ENCODE measurements at regions of chr5 and their contacts with region 1.

Region 1: GRCh38 chr5:124748687-124749594 is 2.5 kb upstream of the ZNF608 start:
- DNase-seq: peak; percentile 86
- ATAC-seq: peak; percentile 89
- H3K4me3 ChIP-seq: peak overlapping the region; percentile 83
- H3K27ac ChIP-seq: peak overlapping the region; percentile 94
- H3K4me1 ChIP-seq: peaks cover 3% of the 10 kb centered on the region; the same call in 1 of the 2 replicates
- H3K27me3 ChIP-seq: 0 out of 4 replicates have a peak, but pooled peaks cover 0 to 4% of the 10 kb centered on the region in 2 experiments
- CTCF ChIP-seq: no peak
- EP300 ChIP-seq: no peak
- POLR2A ChIP-seq: peak; percentile 48; the same call in 1 of the 2 replicates
- RAD21 ChIP-seq: no peak

Region 2: GRCh38 chr5:123937230-123937629 is 811.7 kb before region 1 on chr5:
- CTCF ChIA-PET with region 1: no interaction called
- POLR2A ChIA-PET with region 1: no interaction called
- RAD21 ChIA-PET with region 1: no interaction called
- SMC1A ChIA-PET with region 1: no interaction called
- in situ Hi-C with region 1: no loop called
- intact Hi-C with region 1: loop called (anchors 10 kb)
- DNase-seq: peak; percentile 3
- ATAC-seq: peak; percentile 73
- H3K4me3 ChIP-seq: no peak overlapping the region
- H3K27ac ChIP-seq: no peak overlapping the region
- H3K4me1 ChIP-seq: no peaks in the 10 kb centered on the region
- H3K27me3 ChIP-seq: no peaks in the 10 kb centered on the region
- CTCF ChIP-seq: peak; percentile 39 to 54 (median 51); a peak in 4 of 6 replicates
- EP300 ChIP-seq: no peak
- POLR2A ChIP-seq: no peak
- RAD21 ChIP-seq: peak; percentile 80

Region 3: DNA sequence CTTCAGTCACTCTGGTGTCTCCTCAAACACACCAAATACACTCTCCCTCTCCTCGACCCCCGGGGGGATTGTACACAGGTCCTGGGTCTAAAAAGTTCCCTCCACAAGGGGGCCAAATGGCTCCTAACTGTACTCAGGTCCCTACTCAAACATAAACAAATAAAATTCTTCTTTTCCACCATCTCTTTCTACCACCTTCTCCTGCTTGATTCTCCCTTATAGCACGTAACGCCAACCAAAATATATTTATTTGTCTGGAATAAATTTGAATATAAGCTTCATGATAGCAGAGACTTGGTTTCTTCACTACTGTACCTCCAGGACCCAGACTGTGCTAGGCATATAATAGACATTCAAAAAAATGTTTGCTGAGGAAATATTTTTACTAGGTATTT is 23.9 kb before region 1 on chr5:
- CTCF ChIA-PET with region 1: no interaction called
- POLR2A ChIA-PET with region 1: interaction called, 8 read pairs
- RAD21 ChIA-PET with region 1: interaction called, 22 read pairs
- SMC1A ChIA-PET with region 1: interaction called, 12 read pairs
- in situ Hi-C with region 1: no loop called
- intact Hi-C with region 1: no loop called
- DNase-seq: no peak
- ATAC-seq: peak; percentile 78
- H3K4me3 ChIP-seq: peak overlapping the region; percentile 46; the same call in 1 of the 2 replicates
- H3K27ac ChIP-seq: peak overlapping the region; percentile 73
- H3K4me1 ChIP-seq: peaks cover 12% of the 10 kb centered on the region
- H3K27me3 ChIP-seq: no peaks in the 10 kb centered on the region
- CTCF ChIP-seq: peak; percentile 32 to 44 (median 33); a peak in 5 of 6 replicates
- EP300 ChIP-seq: no peak
- POLR2A ChIP-seq: no peak
- RAD21 ChIP-seq: peak; percentile 43

Region 4: GRCh38 chr5:124796495-124796894 is 47.6 kb after region 1 on chr5:
- CTCF ChIA-PET with region 1: interaction called, 6 read pairs
- POLR2A ChIA-PET with region 1: no interaction called
- RAD21 ChIA-PET with region 1: interaction called, 7 read pairs
- SMC1A ChIA-PET with region 1: interaction called, 17 read pairs
- in situ Hi-C with region 1: no loop called
- intact Hi-C with region 1: no loop called
- DNase-seq: peak; percentile 21
- ATAC-seq: peak; percentile 70
- H3K4me3 ChIP-seq: no peak overlapping the region
- H3K27ac ChIP-seq: no peak overlapping the region
- H3K4me1 ChIP-seq: peaks cover 20% of the 10 kb centered on the region
- H3K27me3 ChIP-seq: no peaks in the 10 kb centered on the region
- CTCF ChIP-seq: no peak
- EP300 ChIP-seq: no peak
- POLR2A ChIP-seq: no peak
- RAD21 ChIP-seq: no peak

Region 5: DNA sequence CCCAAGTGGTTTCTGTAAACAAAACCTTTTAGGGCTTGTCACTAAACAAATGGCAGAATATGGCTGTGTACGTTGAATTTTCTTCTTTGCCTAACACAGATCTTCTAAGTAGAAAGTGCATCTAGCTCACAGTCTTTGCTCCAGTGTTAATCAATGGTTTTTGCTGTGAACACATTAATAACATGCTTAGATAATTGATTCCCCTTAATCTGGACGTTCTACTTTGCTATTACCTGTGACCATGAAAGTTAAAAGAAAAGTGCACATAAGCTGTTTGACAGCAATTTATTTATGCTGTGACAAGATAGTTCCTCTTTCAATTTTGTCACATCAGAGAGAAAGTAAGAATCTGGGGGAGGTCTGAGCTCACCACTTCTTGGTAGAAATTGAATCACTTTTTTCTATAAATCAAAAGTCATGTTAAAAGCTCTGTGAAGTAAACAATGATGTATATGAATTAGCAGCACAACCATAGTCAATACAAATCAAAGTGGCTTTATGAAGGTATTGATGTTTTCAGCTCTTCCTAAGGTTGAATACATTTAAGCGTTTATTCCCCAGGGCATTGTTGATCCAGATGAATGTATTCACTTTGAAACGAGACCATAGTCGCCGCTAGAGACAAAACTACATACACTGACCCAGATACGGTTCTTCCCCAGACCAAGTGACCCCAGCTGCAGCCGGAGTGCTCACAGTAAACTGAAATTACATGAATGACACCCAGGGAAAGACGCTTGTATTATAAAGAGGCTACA is 172.1 kb after region 1 on chr5:
- CTCF ChIA-PET with region 1: interaction called, 6 read pairs
- POLR2A ChIA-PET with region 1: interaction called, 9 read pairs
- RAD21 ChIA-PET with region 1: interaction called, 80 read pairs
- SMC1A ChIA-PET with region 1: interaction called, 57 read pairs
- in situ Hi-C with region 1: no loop called
- intact Hi-C with region 1: loop called (anchors 5 kb)
- DNase-seq: no peak
- ATAC-seq: peak; percentile 92
- H3K4me3 ChIP-seq: peak overlapping the region; percentile 44; the same call in 1 of the 2 replicates
- H3K27ac ChIP-seq: peak overlapping the region; percentile 86
- H3K4me1 ChIP-seq: peaks cover 30% of the 10 kb centered on the region
- H3K27me3 ChIP-seq: no peaks in the 10 kb centered on the region
- CTCF ChIP-seq: peak in 1 of 3 experiments; percentile 14; a peak in 1 of 6 replicates
- EP300 ChIP-seq: peak; percentile 83 to 85
- POLR2A ChIP-seq: no peak
- RAD21 ChIP-seq: peak; percentile 27

Region 6: GRCh38 chr5:124986667-124987066 is 237.7 kb after region 1 on chr5:
- CTCF ChIA-PET with region 1: no interaction called
- POLR2A ChIA-PET with region 1: no interaction called
- RAD21 ChIA-PET with region 1: no interaction called
- SMC1A ChIA-PET with region 1: no interaction called
- in situ Hi-C with region 1: no loop called
- intact Hi-C with region 1: no loop called
- DNase-seq: no peak
- ATAC-seq: no peak
- H3K4me3 ChIP-seq: no peak overlapping the region
- H3K27ac ChIP-seq: no peak overlapping the region
- H3K4me1 ChIP-seq: peaks cover 5% of the 10 kb centered on the region
- H3K27me3 ChIP-seq: no peaks in the 10 kb centered on the region
- CTCF ChIP-seq: no peak
- EP300 ChIP-seq: no peak
- POLR2A ChIP-seq: no peak
- RAD21 ChIP-seq: no peak

Region 7: GRCh38 chr5:125412561-125413495 is 663.9 kb after region 1 on chr5:
- CTCF ChIA-PET with region 1: no interaction called
- POLR2A ChIA-PET with region 1: no interaction called
- RAD21 ChIA-PET with region 1: interaction called, 10 read pairs
- SMC1A ChIA-PET with region 1: no interaction called
- in situ Hi-C with region 1: no loop called
- intact Hi-C with region 1: loop called (anchors 5 kb)
- DNase-seq: no peak
- ATAC-seq: peak; percentile 57
- H3K4me3 ChIP-seq: peak overlapping the region; percentile 51; the same call in 1 of the 2 replicates
- H3K27ac ChIP-seq: peak overlapping the region; percentile 88
- H3K4me1 ChIP-seq: peaks cover 43% of the 10 kb centered on the region
- H3K27me3 ChIP-seq: no peaks in the 10 kb centered on the region
- CTCF ChIP-seq: peak; percentile 2 to 23 (median 3); a peak in 1 of 6 replicates
- EP300 ChIP-seq: no peak
- POLR2A ChIP-seq: no peak
- RAD21 ChIP-seq: 0 out of 2 replicates have a peak, but pooled peaks have one; percentile 23